H1 (cell line): ENCODE measurements at regions of chr17 and their contacts with region 1.

Region 1: DNA sequence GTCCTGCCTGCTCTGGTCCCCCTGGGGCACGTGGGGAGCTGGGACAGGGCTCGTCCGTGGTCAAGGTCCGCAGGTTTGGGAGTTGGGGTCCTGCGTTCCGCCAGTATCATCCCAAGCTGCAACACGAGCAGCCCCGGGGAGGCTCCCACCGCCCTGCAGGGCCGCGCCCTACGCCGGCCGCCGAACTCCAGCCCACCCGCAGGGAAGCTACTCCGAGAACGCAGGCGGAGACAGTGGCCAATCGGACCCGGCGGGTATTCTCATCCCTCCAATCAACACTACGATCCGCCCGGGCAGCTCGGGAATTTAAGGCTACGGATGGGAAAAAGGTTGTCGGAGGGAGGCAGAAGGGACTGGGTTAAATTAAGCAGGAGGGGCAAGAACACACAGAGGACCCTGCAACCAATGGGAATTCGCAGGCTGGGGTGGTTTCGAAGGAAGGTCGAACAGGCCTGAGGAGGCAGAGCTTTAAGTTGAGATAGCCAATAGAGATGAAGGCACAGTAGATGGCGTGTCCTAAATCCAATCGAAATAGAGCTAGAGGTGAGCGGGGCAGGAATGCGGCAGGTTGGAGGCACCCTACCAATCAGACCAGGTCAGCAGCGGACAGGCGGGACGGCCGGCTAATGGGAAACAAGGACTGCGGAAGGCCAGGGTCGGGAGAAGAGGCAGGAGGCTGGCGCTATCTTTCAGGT is 626 bp downstream of the SPAG7 start:
- DNase-seq: peak; percentile 85 to 99
- H3K4me3 ChIP-seq: peak overlapping the region; percentile 71 to 90 (median 85)
- H3K27ac ChIP-seq: peak overlapping the region; percentile 96
- H3K4me1 ChIP-seq: peaks cover 2 to 14% (median 8%) of the 10 kb centered on the region in 4 experiments
- H3K27me3 ChIP-seq: peaks cover 0 to under 1% (median 0%) of the 10 kb centered on the region in 4 experiments; a peak in 2 of 7 replicates
- CTCF ChIP-seq: no peak
- EP300 ChIP-seq: no peak
- POLR2A ChIP-seq: no peak
- RAD21 ChIP-seq: no peak

Region 2: DNA sequence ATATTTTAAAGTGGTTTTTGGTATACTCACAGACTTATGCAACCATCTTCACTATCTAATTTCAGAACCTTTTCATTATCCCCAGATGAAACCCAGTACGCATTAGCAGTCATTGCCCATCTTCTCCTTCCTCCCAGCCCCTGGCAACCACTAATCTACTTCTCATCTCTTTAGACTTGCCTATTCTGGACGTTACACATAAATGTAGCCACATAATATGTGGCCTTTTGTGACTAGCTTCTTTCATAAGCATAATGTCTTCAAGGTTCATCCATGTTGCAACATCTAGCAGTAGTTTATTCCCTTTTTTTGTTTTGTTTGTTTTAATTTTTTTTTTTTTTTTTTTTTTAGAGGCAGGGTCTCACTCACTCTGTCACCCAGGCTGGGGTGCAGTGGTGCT is 96.1 kb before region 1 on chr17:
- CTCF ChIA-PET with region 1: no interaction called
- POLR2A ChIA-PET with region 1: no interaction called
- DNase-seq: no peak
- H3K4me3 ChIP-seq: no peak overlapping the region
- H3K27ac ChIP-seq: no peak overlapping the region
- H3K4me1 ChIP-seq: peaks cover 0 to 7% (median 4%) of the 10 kb centered on the region in 4 experiments; a peak in 6 of 7 replicates
- H3K27me3 ChIP-seq: no peaks in the 10 kb centered on the region
- CTCF ChIP-seq: no peak
- EP300 ChIP-seq: no peak
- POLR2A ChIP-seq: no peak
- RAD21 ChIP-seq: no peak

Region 3: DNA sequence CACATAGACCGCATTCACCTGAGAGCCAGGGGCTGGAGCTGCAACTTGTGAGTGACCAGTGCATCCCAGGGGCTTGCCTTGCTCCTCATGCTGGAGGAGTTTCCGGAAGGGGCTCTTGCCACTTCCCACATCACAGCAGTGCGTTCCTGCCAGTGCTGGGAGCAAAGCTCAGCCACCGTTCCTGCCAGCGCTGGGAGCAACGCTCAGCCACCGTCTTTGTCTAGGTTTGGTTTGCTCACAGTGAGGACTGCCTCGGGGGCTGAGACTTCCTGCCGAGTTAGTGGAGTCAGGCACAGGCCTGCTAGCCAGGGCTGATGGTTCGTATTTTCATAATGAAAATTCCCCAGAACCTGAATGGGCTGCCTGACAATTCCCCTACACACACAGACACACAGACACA is 58.7 kb before region 1 on chr17:
- CTCF ChIA-PET with region 1: interaction called, 31 read pairs
- POLR2A ChIA-PET with region 1: interaction called, 10 read pairs
- DNase-seq: no peak
- H3K4me3 ChIP-seq: no peak overlapping the region
- H3K27ac ChIP-seq: no peak overlapping the region
- H3K4me1 ChIP-seq: peaks cover 2 to 12% (median 4%) of the 10 kb centered on the region in 4 experiments; a peak in 6 of 7 replicates
- H3K27me3 ChIP-seq: no peaks in the 10 kb centered on the region
- CTCF ChIP-seq: no peak
- EP300 ChIP-seq: no peak
- POLR2A ChIP-seq: no peak
- RAD21 ChIP-seq: no peak

Region 4: DNA sequence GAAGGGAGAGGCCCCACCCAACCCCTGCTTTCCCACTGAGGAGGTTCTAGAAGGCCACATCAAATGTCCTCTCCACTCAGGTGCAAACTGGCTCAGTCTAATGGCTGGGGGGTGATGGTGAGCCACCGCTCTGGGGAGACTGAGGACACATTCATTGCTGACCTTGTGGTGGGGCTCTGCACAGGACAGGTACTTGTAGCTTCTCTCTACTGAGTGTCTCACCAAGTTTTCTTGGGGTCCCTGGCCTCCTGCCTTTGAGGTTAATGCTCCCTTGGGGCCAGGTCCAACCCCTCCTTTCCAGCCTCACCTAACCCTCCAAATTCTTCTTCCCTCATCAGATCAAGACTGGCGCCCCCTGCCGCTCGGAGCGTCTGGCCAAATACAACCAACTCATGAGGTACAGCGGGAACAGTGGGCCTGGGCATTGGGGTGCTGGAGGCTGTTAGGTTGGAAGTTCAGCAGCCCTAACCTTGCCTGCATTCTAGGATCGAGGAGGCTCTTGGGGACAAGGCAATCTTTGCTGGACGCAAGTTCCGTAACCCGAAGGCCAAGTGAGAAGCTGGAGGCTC is 10.4 kb before region 1 on chr17:
- CTCF ChIA-PET with region 1: interaction called, 32 read pairs
- POLR2A ChIA-PET with region 1: interaction called, 987 read pairs
- DNase-seq: peak in 1 of 2 experiments; percentile 93
- H3K4me3 ChIP-seq: no peak overlapping the region
- H3K27ac ChIP-seq: no peak overlapping the region
- H3K4me1 ChIP-seq: peaks cover 0 to 14% (median 8%) of the 10 kb centered on the region in 4 experiments; a peak in 5 of 7 replicates
- H3K27me3 ChIP-seq: no peaks in the 10 kb centered on the region
- CTCF ChIP-seq: peak; percentile 59 to 74 (median 71)
- EP300 ChIP-seq: no peak
- POLR2A ChIP-seq: no peak
- RAD21 ChIP-seq: peak; percentile 25 to 46; a peak in 3 of 4 replicates

Region 5: DNA sequence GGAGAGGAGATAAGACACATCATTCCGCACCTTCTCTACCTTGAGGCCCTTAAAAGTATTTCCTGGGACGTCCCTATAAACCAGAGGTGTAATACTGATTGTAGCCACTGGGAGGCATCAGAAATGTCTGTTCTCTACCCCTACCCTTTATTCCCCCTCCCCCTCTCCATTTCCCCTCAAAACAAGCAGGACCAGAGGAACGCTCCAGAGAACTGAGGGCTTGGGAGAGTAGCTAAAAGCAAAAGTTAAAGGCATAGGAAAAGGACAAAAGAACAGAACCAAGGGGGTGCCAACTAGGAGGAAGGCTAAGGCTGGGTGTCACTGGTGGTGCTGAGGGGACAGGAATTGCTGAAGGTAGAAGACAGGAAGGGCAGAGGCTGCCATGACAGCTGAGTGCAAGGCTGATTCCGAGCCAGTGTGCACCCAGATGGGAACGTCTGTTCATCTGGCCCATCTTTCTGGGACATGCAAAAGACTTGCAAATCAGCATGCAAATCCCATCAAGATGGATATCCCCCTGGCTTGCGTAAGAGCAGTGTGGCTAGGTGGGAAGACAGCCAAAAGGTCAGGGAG is 13.7 kb after region 1 on chr17:
- CTCF ChIA-PET with region 1: interaction called, 41 read pairs
- POLR2A ChIA-PET with region 1: interaction called, 128 read pairs
- DNase-seq: peak in 1 of 2 experiments; percentile 73
- H3K4me3 ChIP-seq: no peak overlapping the region
- H3K27ac ChIP-seq: no peak overlapping the region
- H3K4me1 ChIP-seq: peaks cover 0 to 4% (median 3%) of the 10 kb centered on the region in 4 experiments; a peak in 3 of 7 replicates
- H3K27me3 ChIP-seq: peaks cover 0 to 20% (median 18%) of the 10 kb centered on the region in 4 experiments; a peak in 6 of 7 replicates
- CTCF ChIP-seq: peak in 2 of 3 experiments; percentile 63 to 80; a peak in 3 of 4 replicates
- EP300 ChIP-seq: no peak
- POLR2A ChIP-seq: no peak
- RAD21 ChIP-seq: peak; percentile 61 to 69

Region 6: GRCh38 chr17:4986951-4987766 is 20.2 kb after region 1 on chr17 and contains the start of gene CAMTA2:
- CTCF ChIA-PET with region 1: interaction called, 8 read pairs
- POLR2A ChIA-PET with region 1: interaction called, 128 read pairs
- DNase-seq: peak in 1 of 2 experiments; percentile 93
- H3K4me3 ChIP-seq: peak within 1 kb of the TSS; percentile 59 to 85 (median 66)
- H3K27ac ChIP-seq: no peak within 1 kb of the TSS
- H3K4me1 ChIP-seq: peaks cover 0 to 7% (median 4%) of the 10 kb centered on the region in 4 experiments; a peak in 5 of 7 replicates
- H3K27me3 ChIP-seq: peaks cover 0 to 11% (median 9%) of the 10 kb centered on the region in 4 experiments; a peak in 6 of 7 replicates
- CTCF ChIP-seq: peak; percentile 40 to 52 (median 47)
- EP300 ChIP-seq: peak in 1 of 2 experiments; percentile 29; a peak in 1 of 3 replicates
- POLR2A ChIP-seq: no peak
- RAD21 ChIP-seq: peak in 1 of 2 experiments; percentile 27; a peak in 1 of 4 replicates
- total RNA-seq, gene CAMTA2: 11.4 and 12.0 TPM in 2 replicates

Region 7: DNA sequence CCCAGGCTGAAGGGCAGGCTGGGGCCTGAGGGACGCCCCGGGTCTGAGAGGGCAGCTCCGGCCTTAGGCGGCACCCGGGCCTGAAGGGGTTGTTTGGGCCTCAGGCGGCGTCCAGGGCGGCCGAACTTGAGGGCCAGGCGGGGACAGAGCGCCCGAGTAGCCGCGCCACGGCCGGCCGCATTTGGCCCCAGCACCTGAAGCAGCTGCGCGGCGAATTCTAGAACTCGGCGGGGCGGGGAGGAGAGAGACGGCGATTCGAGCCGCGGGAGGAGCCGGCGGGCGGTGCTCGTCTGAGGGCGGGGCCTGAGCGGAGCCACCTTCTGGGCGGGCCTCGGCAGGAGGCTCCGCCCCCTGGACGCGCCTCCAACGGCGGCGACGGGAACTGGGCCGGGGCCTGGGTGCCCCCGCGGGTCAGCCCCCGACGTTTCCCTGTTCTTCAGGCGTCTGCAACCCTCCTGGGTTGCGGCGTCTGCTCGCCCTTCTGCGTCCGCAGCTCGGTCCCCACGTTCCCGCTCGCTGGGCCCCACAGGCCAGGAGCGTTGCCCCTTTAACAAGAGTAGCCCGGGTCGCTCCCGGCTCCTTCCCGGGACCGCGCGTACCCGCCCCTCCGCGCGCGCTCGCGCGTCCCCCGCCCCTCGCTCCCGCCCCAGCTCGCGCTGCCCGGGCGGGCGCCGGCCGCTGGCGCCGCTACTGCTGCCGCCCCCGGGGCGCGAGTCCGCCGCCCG is 30.5 kb after region 1 on chr17 and contains the starts of genes INCA1 and KIF1C:
- CTCF ChIA-PET with region 1: interaction called, 4 read pairs
- POLR2A ChIA-PET with region 1: interaction called, 128 read pairs
- DNase-seq: peak; percentile 64 to 95
- H3K4me3 ChIP-seq: peak within 1 kb of the TSS; percentile 75 to 80 (median 78)
- H3K27ac ChIP-seq: peak within 1 kb of the TSS; percentile 88; the same call in 1 of the 2 replicates
- H3K4me1 ChIP-seq: peaks cover 4 to 17% (median 8%) of the 10 kb centered on the region in 4 experiments
- H3K27me3 ChIP-seq: peaks cover 0 to 13% (median 1%) of the 10 kb centered on the region in 4 experiments; a peak in 4 of 7 replicates
- CTCF ChIP-seq: no peak
- EP300 ChIP-seq: no peak; a peak in 1 of 3 replicates
- POLR2A ChIP-seq: no peak; a peak in 1 of 3 replicates
- RAD21 ChIP-seq: no peak
- total RNA-seq, gene INCA1: 1.1 and 1.4 TPM in 2 replicates
- total RNA-seq, gene KIF1C: 114 and 118 TPM in 2 replicates

Region 8: GRCh38 chr17:5069724-5070123 is 102.7 kb after region 1 on chr17:
- CTCF ChIA-PET with region 1: no interaction called
- POLR2A ChIA-PET with region 1: no interaction called
- DNase-seq: no peak
- H3K4me3 ChIP-seq: no peak overlapping the region
- H3K27ac ChIP-seq: no peak overlapping the region
- H3K4me1 ChIP-seq: no peaks in the 10 kb centered on the region
- H3K27me3 ChIP-seq: no peaks in the 10 kb centered on the region; a peak in 1 of 7 replicates
- CTCF ChIP-seq: no peak
- EP300 ChIP-seq: no peak
- POLR2A ChIP-seq: no peak
- RAD21 ChIP-seq: no peak

Region 9: GRCh38 chr17:5329784-5330557 is 363.0 kb after region 1 on chr17:
- CTCF ChIA-PET with region 1: no interaction called
- POLR2A ChIA-PET with region 1: no interaction called
- DNase-seq: no peak
- H3K4me3 ChIP-seq: no peak overlapping the region
- H3K27ac ChIP-seq: no peak overlapping the region
- H3K4me1 ChIP-seq: no peaks in the 10 kb centered on the region
- H3K27me3 ChIP-seq: no peaks in the 10 kb centered on the region
- CTCF ChIP-seq: no peak
- EP300 ChIP-seq: no peak
- POLR2A ChIP-seq: no peak
- RAD21 ChIP-seq: no peak